Ovary (tissue), 10 donors: ENCODE measurements at regions of chr14 and their contacts with region 1.

Region 1: GRCh38 chr14:92783816-92784431 is 10.2 kb upstream of the GOLGA5 start:
- DNase-seq: peak in 1 of 5 donors; percentile 47
- H3K4me3 ChIP-seq: no peak overlapping the region
- H3K27ac ChIP-seq: no peak overlapping the region
- H3K4me1 ChIP-seq: peaks cover 5% of the 10 kb centered on the region
- H3K27me3 ChIP-seq: no peaks in the 10 kb centered on the region
- CTCF ChIP-seq: peak in 2 of 3 donors; percentile 58 to 64
- EP300 ChIP-seq: no peak
- POLR2A ChIP-seq: no peak

Region 2: GRCh38 chr14:92686900-92687444 is 97.0 kb before region 1 on chr14:
- intact Hi-C with region 1: loop called (anchors 2 to 10 kb)
- DNase-seq: peak; percentile 68 to 90 (median 79)
- H3K4me3 ChIP-seq: peak overlapping the region; percentile 6
- H3K27ac ChIP-seq: no peak overlapping the region
- H3K4me1 ChIP-seq: peaks cover 5% of the 10 kb centered on the region
- H3K27me3 ChIP-seq: no peaks in the 10 kb centered on the region
- CTCF ChIP-seq: peak; percentile 89 to 100 (median 98)
- EP300 ChIP-seq: no peak
- POLR2A ChIP-seq: no peak

Region 3: DNA sequence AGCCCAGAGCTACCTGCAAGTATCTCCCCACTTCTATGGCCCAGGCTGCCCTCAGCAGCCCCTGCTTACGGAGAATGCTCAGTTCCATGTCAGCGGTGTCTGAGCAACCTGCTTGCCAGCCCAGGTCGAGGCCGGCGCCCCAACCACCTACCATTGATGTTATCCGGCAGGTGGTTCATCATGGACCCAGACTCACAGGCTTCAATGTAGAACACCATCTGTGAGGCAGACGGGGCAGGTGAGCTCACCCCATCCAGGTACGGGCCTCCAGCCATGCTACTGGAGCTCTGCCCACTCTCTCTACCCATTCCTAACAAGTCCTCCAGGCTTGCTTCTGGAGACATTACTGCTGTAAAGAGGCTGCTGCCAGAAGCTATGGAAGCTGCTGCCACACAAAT is 71.3 kb before region 1 on chr14:
- intact Hi-C with region 1: loop called in 2 of 4 experiments (anchors 5 to 10 kb)
- DNase-seq: no peak
- H3K4me3 ChIP-seq: no peak overlapping the region
- H3K27ac ChIP-seq: no peak overlapping the region
- H3K4me1 ChIP-seq: peaks cover 4% of the 10 kb centered on the region
- H3K27me3 ChIP-seq: no peaks in the 10 kb centered on the region
- CTCF ChIP-seq: no peak
- EP300 ChIP-seq: no peak
- POLR2A ChIP-seq: no peak

Region 4: GRCh38 chr14:92719890-92720323 is 64.0 kb before region 1 on chr14:
- intact Hi-C with region 1: loop called in 1 of 4 experiments (anchors 10 kb)
- DNase-seq: no peak
- H3K4me3 ChIP-seq: no peak overlapping the region
- H3K27ac ChIP-seq: no peak overlapping the region
- H3K4me1 ChIP-seq: peaks cover 5% of the 10 kb centered on the region
- H3K27me3 ChIP-seq: no peaks in the 10 kb centered on the region
- CTCF ChIP-seq: no peak
- EP300 ChIP-seq: no peak
- POLR2A ChIP-seq: no peak

Region 5: DNA sequence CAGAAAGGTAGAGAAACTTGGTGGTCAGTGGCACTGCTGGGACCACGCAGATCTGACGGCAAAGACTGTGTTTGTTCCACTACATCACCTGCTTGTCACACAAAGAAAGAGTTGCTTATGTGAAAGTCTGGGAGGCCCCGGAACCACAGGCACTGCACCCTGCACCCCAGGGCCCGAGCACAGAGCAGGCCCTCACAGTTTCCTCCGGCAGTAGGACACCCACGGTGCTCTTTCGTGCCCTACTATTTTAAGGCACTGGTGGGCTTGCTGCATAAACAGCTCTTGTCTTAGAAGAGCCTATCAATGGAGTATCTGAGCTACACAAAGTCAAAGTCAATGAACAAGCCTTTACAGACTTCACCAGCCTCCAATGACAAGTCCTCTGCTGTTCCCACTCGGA is 43.5 kb before region 1 on chr14:
- intact Hi-C with region 1: loop called in 1 of 4 experiments (anchors 2 kb)
- DNase-seq: no peak
- H3K4me3 ChIP-seq: no peak overlapping the region
- H3K27ac ChIP-seq: no peak overlapping the region
- H3K4me1 ChIP-seq: peaks cover 2% of the 10 kb centered on the region
- H3K27me3 ChIP-seq: no peaks in the 10 kb centered on the region
- CTCF ChIP-seq: no peak
- EP300 ChIP-seq: no peak
- POLR2A ChIP-seq: no peak